Activated CD8-positive, alpha-beta memory T cell treated with anti-CD3 and anti-CD28 coated beads, Interleukin-2, amount 10 ng/mL, durations not matched to agents 7 days and 5 days (primary cell): ENCODE measurements at regions of chr11 and their contacts with region 1.

Region 1: DNA sequence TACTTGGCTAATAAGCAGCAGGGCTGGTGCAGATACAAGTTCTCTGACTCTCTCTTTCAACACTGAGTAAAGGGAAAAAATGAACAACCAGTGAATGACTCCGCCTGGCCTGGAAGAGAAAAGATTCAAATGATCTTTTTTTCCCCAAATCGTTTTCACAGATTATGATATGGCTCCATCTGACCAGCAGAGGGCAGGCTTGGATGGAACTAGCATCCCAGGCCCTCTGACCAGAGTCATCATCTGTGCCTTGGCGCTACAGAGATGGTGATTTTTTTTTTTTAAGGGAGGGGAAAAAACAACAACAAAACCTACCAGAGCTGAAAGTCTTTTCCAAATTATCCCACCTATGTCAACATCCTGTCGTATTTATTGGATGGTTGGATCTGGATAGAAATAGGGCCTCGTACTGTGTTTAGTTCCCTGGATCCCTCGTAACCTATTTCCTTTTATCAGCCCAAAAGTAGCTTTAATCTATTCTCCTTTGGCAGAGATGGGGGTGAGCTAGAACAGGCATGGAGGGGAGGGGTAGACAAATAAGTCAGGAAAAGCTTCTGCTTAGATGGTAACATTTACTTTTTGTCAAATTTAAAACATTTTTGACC is 69.7 kb downstream of the PRSS23 start:
- DNase-seq: peak; percentile 61
- ATAC-seq: peak; percentile 80
- H3K4me3 Mint-ChIP-seq: no peak overlapping the region
- H3K27ac Mint-ChIP-seq: no peak overlapping the region
- H3K4me1 Mint-ChIP-seq: no peaks in the 10 kb centered on the region
- H3K27me3 Mint-ChIP-seq: peaks cover 15% of the 10 kb centered on the region

Region 2: DNA sequence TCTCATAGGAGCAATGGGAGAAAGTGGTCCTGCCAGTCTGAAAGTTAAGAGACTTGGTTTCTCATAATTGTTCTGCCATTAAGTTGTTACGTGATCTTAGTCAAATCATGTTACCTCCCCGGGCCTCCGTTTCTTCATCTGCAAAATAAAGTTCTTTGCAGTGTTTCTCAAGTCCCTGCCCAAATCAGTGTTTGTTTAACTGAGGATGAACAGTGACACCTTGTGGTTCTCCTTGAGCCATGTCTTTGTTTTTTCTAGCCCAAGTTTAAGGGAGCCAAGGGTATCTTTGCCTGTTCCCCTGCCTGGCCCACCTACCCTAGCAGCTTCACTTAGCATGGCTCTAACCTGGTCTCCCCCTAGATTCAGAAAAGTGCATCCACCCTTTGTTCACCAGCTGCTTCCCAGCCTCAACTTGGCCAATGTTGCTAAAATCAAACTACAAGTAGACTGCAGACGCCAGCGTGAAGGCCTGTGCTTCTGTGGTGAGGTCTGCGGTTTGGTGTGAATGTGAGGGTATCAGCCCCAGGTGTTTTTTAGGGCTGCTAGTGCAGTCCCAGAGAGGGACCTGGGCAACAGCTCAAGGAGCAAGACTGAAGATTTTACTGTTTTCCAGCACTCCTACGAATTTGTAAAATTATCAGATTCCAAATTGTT is 49.6 kb after region 1 on chr11:
- CTCF ChIA-PET with region 1: interaction called, 30 read pairs
- DNase-seq: no peak
- ATAC-seq: peak; percentile 23
- H3K4me3 Mint-ChIP-seq: no peak overlapping the region
- H3K27ac Mint-ChIP-seq: no peak overlapping the region
- H3K4me1 Mint-ChIP-seq: peaks cover 6% of the 10 kb centered on the region
- H3K27me3 Mint-ChIP-seq: peaks cover 23% of the 10 kb centered on the region